PC-3 (cell line): ENCODE measurements at regions of chr3 and their contacts with region 1.

Region 1: GRCh38 chr3:24343084-24343783 is 151.4 kb downstream of the THRB start:
- DNase-seq: peak; percentile 94
- ATAC-seq: peak; percentile 93
- H3K4me3 ChIP-seq: peak overlapping the region; percentile 23; the same call in 1 of the 2 replicates
- H3K27ac ChIP-seq: peak overlapping the region; percentile 86
- H3K4me1 ChIP-seq: peaks cover 48% of the 10 kb centered on the region
- H3K27me3 ChIP-seq: no peaks in the 10 kb centered on the region
- CTCF ChIP-seq: no peak

Region 2: GRCh38 chr3:24060055-24060454 is 283.2 kb before region 1 on chr3:
- CTCF ChIA-PET with region 1: no interaction called
- POLR2A ChIA-PET with region 1: no interaction called
- intact Hi-C with region 1: no loop called
- DNase-seq: peak; percentile 56
- ATAC-seq: no peak
- H3K4me3 ChIP-seq: no peak overlapping the region
- H3K27ac ChIP-seq: no peak overlapping the region
- H3K4me1 ChIP-seq: no peaks in the 10 kb centered on the region
- H3K27me3 ChIP-seq: no peaks in the 10 kb centered on the region
- CTCF ChIP-seq: no peak

Region 3: DNA sequence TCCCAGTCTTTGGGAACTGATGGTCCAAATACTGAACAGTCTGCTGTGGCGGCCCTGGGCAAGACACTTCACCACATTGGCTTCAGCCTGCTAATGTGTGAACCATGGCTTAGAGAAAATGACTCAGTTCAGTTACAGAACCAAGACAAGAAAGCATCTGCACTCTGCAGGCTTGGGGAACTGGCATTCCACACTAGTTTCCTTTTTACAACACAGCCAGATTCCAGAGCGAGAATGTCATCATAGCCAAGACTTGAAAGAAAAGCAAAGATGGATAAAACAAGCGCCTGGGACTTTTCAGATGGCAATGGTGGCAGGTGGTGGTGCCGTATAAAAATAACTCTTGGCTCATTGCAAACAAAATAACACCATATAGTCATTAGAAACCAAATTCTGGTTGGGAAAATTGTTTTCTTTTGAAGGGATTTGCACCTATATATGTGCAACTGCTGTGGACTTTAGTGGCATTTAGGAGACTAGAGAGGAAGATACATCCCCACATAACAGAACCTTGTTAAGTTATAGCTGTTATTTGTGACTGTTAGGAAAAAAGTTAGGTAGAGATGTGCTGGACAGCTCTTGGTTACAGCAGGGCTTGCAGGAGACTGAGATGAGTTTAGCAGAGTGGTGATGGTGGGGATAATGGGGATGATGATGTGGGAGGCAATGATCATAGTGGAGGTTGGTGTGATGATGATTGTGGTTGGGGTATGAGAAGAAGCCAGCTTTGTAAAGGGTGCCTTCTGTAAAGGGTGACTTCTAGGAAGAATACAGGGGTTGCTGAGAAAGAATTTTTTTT is 122.2 kb before region 1 on chr3:
- CTCF ChIA-PET with region 1: no interaction called
- POLR2A ChIA-PET with region 1: no interaction called
- intact Hi-C with region 1: no loop called
- DNase-seq: peak; percentile 79
- ATAC-seq: peak; percentile 49
- H3K4me3 ChIP-seq: no peak overlapping the region
- H3K27ac ChIP-seq: no peak overlapping the region
- H3K4me1 ChIP-seq: peaks cover 7% of the 10 kb centered on the region; the same call in 1 of the 2 replicates
- H3K27me3 ChIP-seq: no peaks in the 10 kb centered on the region
- CTCF ChIP-seq: no peak

Region 4: GRCh38 chr3:24323272-24323671 is 20.0 kb before region 1 on chr3:
- CTCF ChIA-PET with region 1: no interaction called
- POLR2A ChIA-PET with region 1: interaction called, 3 read pairs
- intact Hi-C with region 1: loop called (anchors 1 kb)
- DNase-seq: peak; percentile 92
- ATAC-seq: peak; percentile 92
- H3K4me3 ChIP-seq: no peak overlapping the region
- H3K27ac ChIP-seq: peak overlapping the region; percentile 28
- H3K4me1 ChIP-seq: peaks cover 24% of the 10 kb centered on the region
- H3K27me3 ChIP-seq: no peaks in the 10 kb centered on the region
- CTCF ChIP-seq: no peak

Region 5: GRCh38 chr3:24382647-24383046 is 39.4 kb after region 1 on chr3:
- CTCF ChIA-PET with region 1: no interaction called
- POLR2A ChIA-PET with region 1: interaction called, 4 read pairs
- intact Hi-C with region 1: loop called (anchors 1 kb)
- DNase-seq: no peak
- ATAC-seq: no peak
- H3K4me3 ChIP-seq: no peak overlapping the region
- H3K27ac ChIP-seq: no peak overlapping the region
- H3K4me1 ChIP-seq: peaks cover 18% of the 10 kb centered on the region
- H3K27me3 ChIP-seq: no peaks in the 10 kb centered on the region
- CTCF ChIP-seq: no peak